ENCODE measurements at regions of chr5 and their contacts with region 1.

Region 1: DNA sequence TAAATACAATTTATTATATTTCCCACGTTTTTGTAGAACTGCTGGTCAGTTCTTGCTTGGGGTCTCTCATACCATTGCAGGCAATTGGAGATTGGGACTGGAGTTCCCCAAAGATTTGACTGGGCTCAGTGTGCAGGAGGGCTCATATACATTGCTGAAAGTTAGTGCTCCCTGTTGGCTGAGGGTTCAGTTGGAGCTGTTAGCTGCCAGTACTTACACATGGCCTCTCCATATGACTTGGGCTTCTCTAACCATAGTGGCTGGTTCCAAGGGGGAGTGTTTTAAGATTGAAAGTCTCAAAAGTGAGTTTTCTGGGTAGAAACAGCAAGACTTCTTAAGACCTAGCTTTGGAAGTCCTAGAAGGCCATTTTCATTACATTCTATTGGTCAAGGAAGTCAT is 102.9 kb downstream of the MAN2A1 start:
- DNase-seq: no peak
- H3K4me3 ChIP-seq: no peak overlapping the region
- CTCF ChIP-seq: no peak

Region 2: GRCh38 chr5:109739741-109740728 is 52.6 kb before region 1 on chr5:
- in situ Hi-C with region 1: loop called (anchors 5 kb)
- DNase-seq: peak; percentile 37
- H3K4me3 ChIP-seq: no peak overlapping the region
- CTCF ChIP-seq: no peak

Measured in astrocyte of the cerebellum (primary cell).